ENCODE measurements at regions of chr6 and their contacts with region 1.

Region 1: GRCh38 chr6:135535989-135536414 is 38.5 kb upstream of the AHI1 start:
- DNase-seq: peak in 1 of 2 donors; percentile 64
- ATAC-seq: peak; percentile 46 to 66 (median 46)
- H3K4me3 ChIP-seq: no peak overlapping the region
- H3K4me3 Mint-ChIP-seq: peak overlapping the region; percentile 25
- H3K27ac ChIP-seq: no peak overlapping the region
- H3K27ac Mint-ChIP-seq: peak overlapping the region; percentile 22 to 36
- H3K4me1 ChIP-seq: peaks cover 11% of the 10 kb centered on the region
- H3K4me1 Mint-ChIP-seq: peaks cover 33 to 36% of the 10 kb centered on the region in 2 donors
- H3K27me3 ChIP-seq: no peaks in the 10 kb centered on the region
- H3K27me3 Mint-ChIP-seq: peaks cover 3 to 5% of the 10 kb centered on the region in 2 donors
- CTCF ChIP-seq: peak; percentile 79

Region 2: DNA sequence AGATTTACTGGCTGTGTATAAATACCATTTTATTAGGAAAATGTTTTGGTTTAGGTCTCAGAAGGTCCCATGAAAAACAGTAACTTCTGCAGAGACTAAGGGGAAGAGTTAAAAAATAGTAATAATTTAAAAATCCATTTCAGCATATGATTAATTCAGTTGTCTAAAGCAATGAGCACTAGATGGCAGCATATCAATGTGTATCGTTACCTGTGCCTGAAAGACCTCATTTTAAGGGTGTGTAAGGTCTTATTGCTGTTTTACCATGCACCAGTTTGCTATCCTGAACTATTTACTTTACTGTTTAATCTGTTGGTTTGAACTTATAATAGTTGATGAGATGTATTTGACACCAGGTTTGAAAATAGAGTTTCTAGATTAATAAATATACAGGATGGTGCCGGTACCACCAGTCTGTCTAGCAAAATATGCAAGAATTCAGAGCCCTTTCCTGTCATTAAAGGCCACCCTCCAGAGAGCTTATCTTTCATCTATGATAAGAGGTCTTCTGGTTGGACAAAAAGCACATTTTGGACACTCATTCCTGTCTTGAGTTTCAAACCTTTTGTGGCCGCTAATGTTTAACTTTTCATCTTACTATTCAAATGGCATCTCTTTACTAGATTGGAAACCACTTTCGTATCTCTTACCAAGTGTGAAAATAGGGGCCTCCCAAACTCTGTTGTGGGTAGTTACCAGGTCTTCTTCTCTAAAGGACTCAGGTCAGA is 29.6 kb before region 1 on chr6:
- intact Hi-C with region 1: loop called (anchors 2 kb)
- DNase-seq: peak in 1 of 2 donors; percentile 75
- ATAC-seq: peak; percentile 87 to 91 (median 88)
- H3K4me3 ChIP-seq: no peak overlapping the region
- H3K4me3 Mint-ChIP-seq: peak overlapping the region; percentile 17
- H3K27ac ChIP-seq: no peak overlapping the region
- H3K27ac Mint-ChIP-seq: peak overlapping the region; percentile 14 to 27
- H3K4me1 ChIP-seq: peaks cover 4% of the 10 kb centered on the region
- H3K4me1 Mint-ChIP-seq: peaks cover 6 to 8% of the 10 kb centered on the region in 2 donors
- H3K27me3 ChIP-seq: no peaks in the 10 kb centered on the region
- H3K27me3 Mint-ChIP-seq: no peaks in the 10 kb centered on the region
- CTCF ChIP-seq: peak; percentile 75

Region 3: DNA sequence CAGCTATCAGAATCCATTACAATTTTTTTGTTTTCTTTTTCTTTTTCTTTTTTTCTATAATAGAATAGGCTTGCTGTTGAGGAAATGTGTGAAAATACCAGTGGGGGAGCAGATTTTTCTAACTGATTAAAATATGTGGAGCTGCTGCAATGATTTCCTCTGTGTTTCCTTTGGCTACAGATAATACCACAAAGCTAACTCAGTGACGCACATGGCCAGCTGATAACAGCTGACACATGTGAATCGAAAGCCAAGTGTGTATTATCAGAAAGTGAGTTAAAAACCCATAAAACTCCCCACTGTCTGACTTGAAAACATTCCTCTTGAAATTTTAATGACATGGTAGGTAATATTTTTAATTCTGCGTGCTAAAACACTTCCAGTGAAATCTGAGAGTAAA is 32.4 kb after region 1 on chr6:
- intact Hi-C with region 1: loop called (anchors 1 kb)
- DNase-seq: peak; percentile 30 to 74
- ATAC-seq: peak; percentile 88 to 99 (median 92)
- H3K4me3 ChIP-seq: no peak overlapping the region
- H3K4me3 Mint-ChIP-seq: peak overlapping the region; percentile 62
- H3K27ac ChIP-seq: no peak overlapping the region
- H3K27ac Mint-ChIP-seq: peak overlapping the region; percentile 37 to 81
- H3K4me1 ChIP-seq: peaks cover 24% of the 10 kb centered on the region
- H3K4me1 Mint-ChIP-seq: peaks cover 27 to 41% of the 10 kb centered on the region in 2 donors
- H3K27me3 ChIP-seq: no peaks in the 10 kb centered on the region
- H3K27me3 Mint-ChIP-seq: no peaks in the 10 kb centered on the region
- CTCF ChIP-seq: no peak

Region 4: DNA sequence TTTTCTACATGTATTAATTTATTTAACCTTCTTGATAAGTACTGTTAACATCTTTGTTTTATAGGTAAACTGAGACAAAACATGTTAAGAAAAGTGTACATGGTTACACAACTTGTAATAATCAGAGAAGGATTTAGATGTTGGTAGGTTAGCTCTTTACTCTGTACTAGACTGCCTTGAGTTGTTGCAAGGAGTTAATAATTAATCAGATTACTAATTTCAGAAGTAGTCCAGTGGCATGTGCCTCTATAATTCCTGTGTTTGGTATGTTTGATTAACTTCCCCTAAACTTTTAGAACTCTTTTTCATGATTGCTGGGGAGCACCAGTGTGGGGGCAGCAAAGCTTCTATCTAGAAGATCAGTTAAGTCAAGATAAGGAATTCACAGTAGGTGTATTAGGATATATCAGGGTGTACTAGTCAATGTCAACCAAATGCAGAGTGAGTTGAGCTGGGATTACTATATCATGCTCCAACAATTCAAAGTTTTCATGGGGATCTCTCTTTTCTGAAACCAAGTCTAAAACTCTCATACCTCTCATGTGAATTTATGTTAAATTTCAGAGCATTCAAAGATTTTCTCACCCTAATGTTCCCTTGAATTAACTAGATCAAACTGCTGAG is 91.2 kb after region 1 on chr6:
- intact Hi-C with region 1: loop called (anchors 1 kb)
- DNase-seq: no peak
- ATAC-seq: no peak
- H3K4me3 ChIP-seq: no peak overlapping the region
- H3K4me3 Mint-ChIP-seq: no peak overlapping the region
- H3K27ac ChIP-seq: no peak overlapping the region
- H3K27ac Mint-ChIP-seq: peak overlapping the region in 1 of 2 donors; percentile 27
- H3K4me1 ChIP-seq: no peaks in the 10 kb centered on the region
- H3K4me1 Mint-ChIP-seq: peaks cover 29 to 39% of the 10 kb centered on the region in 2 donors
- H3K27me3 ChIP-seq: no peaks in the 10 kb centered on the region
- H3K27me3 Mint-ChIP-seq: no peaks in the 10 kb centered on the region
- CTCF ChIP-seq: no peak

Region 5: GRCh38 chr6:135651964-135652755 is 116.2 kb after region 1 on chr6:
- intact Hi-C with region 1: loop called (anchors 10 kb)
- DNase-seq: no peak
- ATAC-seq: peak; percentile 49 to 82 (median 57)
- H3K4me3 ChIP-seq: no peak overlapping the region
- H3K4me3 Mint-ChIP-seq: peak overlapping the region; percentile 58
- H3K27ac ChIP-seq: no peak overlapping the region
- H3K27ac Mint-ChIP-seq: peak overlapping the region; percentile 71 to 79
- H3K4me1 ChIP-seq: peaks cover 4% of the 10 kb centered on the region
- H3K4me1 Mint-ChIP-seq: peaks cover 19 to 21% of the 10 kb centered on the region in 2 donors
- H3K27me3 ChIP-seq: no peaks in the 10 kb centered on the region
- H3K27me3 Mint-ChIP-seq: no peaks in the 10 kb centered on the region
- CTCF ChIP-seq: no peak